Heart left ventricle (tissue), 16 donors: ENCODE measurements at regions of chr11 and their contacts with region 1.

Region 1: GRCh38 chr11:19756675-19757475 is 44.2 kb downstream of the NAV2 start:
- DNase-seq: peak in 2 of 5 donors; percentile 65 to 84
- ATAC-seq: peak; percentile 92 to 96 (median 92)
- H3K4me3 ChIP-seq: no peak overlapping the region
- H3K27ac ChIP-seq: peak overlapping the region; percentile 19 to 89 (median 72)
- H3K4me1 ChIP-seq: peaks cover 0 to 31% (median 13%) of the 10 kb centered on the region in 12 donors
- H3K27me3 ChIP-seq: no peaks in the 10 kb centered on the region
- CTCF ChIP-seq: no peak
- POLR2A ChIP-seq: no peak

Region 2: GRCh38 chr11:19790831-19791552 is 34.1 kb after region 1 on chr11:
- intact Hi-C with region 1: loop called in 2 of 10 experiments (anchors 5 kb)
- DNase-seq: no peak
- ATAC-seq: no peak
- H3K4me3 ChIP-seq: no peak overlapping the region
- H3K27ac ChIP-seq: no peak overlapping the region
- H3K4me1 ChIP-seq: peaks cover 0 to 56% (median 22%) of the 10 kb centered on the region in 12 donors
- H3K27me3 ChIP-seq: no peaks in the 10 kb centered on the region
- CTCF ChIP-seq: no peak
- POLR2A ChIP-seq: no peak

Region 3: DNA sequence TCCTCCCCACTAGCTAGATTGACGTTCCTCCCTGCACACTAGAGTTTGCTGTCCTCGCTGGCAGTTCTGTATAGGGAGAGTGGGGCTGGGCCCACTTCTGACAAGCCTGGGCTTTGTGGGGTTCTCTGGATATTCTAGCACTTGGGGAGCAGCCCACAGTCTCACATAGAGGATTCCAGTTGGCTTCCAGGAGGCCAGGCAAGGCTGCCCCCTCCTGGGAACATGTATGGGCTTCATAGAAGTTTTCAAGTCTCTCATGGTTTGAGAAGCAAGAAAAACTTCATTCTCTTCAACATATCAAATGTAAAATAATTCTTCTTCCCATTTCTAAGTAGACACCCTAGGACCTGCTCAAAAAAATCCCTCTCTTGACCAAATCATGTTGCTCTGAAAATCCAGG is 43.3 kb after region 1 on chr11:
- intact Hi-C with region 1: loop called in 2 of 10 experiments (anchors 5 to 10 kb)
- DNase-seq: peak in 1 of 5 donors; percentile 25
- ATAC-seq: peak in 2 of 4 donors; percentile 46 to 52
- H3K4me3 ChIP-seq: no peak overlapping the region
- H3K27ac ChIP-seq: no peak overlapping the region
- H3K4me1 ChIP-seq: peaks cover 0 to 64% (median 27%) of the 10 kb centered on the region in 12 donors
- H3K27me3 ChIP-seq: no peaks in the 10 kb centered on the region
- CTCF ChIP-seq: peak in 9 of 12 donors; percentile 18 to 51 (median 31)
- POLR2A ChIP-seq: no peak

Region 4: GRCh38 chr11:19808076-19808911 is 51.4 kb after region 1 on chr11:
- intact Hi-C with region 1: loop called in 2 of 10 experiments (anchors 5 to 10 kb)
- DNase-seq: no peak
- ATAC-seq: no peak
- H3K4me3 ChIP-seq: no peak overlapping the region
- H3K27ac ChIP-seq: no peak overlapping the region
- H3K4me1 ChIP-seq: peaks cover 0 to 65% (median 24%) of the 10 kb centered on the region in 12 donors
- H3K27me3 ChIP-seq: no peaks in the 10 kb centered on the region
- CTCF ChIP-seq: peak in 8 of 12 donors; percentile 8 to 55 (median 38)
- POLR2A ChIP-seq: no peak

Region 5: GRCh38 chr11:19895776-19896175 is 138.9 kb after region 1 on chr11:
- intact Hi-C with region 1: loop called in 1 of 10 experiments (anchors 5 kb)
- DNase-seq: no peak
- ATAC-seq: no peak
- H3K4me3 ChIP-seq: no peak overlapping the region
- H3K27ac ChIP-seq: no peak overlapping the region
- H3K4me1 ChIP-seq: peaks cover 0 to 17% (median 2%) of the 10 kb centered on the region in 12 donors
- H3K27me3 ChIP-seq: no peaks in the 10 kb centered on the region
- CTCF ChIP-seq: no peak
- POLR2A ChIP-seq: no peak

Region 6: DNA sequence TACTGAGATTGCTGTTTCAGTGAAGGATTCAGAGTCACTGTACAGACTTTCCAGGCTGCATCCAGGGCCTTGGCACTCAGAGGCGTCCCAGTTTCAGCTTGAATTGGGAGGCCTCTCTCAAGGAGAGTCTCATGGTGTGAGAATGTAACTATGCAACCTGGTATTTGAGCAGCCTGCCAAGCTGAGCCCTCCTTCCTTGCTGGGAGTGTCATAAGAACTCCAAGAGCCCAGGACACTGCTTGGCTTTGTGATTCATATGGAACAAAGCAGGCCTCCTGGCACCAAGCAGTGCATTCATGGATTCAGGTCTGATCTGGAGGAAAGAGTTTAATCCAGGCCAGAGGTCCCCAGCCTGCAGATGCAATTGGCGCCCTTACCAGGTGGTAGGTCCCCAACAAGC is 231.7 kb after region 1 on chr11:
- intact Hi-C with region 1: no loop called
- DNase-seq: peak in 3 of 5 donors; percentile 31 to 62 (median 53)
- ATAC-seq: peak; percentile 74 to 88 (median 79)
- H3K4me3 ChIP-seq: no peak overlapping the region
- H3K27ac ChIP-seq: peak overlapping the region in 11 of 12 donors; percentile 18 to 71 (median 53)
- H3K4me1 ChIP-seq: peaks cover 0 to 28% (median 10%) of the 10 kb centered on the region in 12 donors
- H3K27me3 ChIP-seq: no peaks in the 10 kb centered on the region
- CTCF ChIP-seq: no peak
- POLR2A ChIP-seq: no peak